ENCODE measurements at regions of chr12 and their contacts with region 1.

Region 1: DNA sequence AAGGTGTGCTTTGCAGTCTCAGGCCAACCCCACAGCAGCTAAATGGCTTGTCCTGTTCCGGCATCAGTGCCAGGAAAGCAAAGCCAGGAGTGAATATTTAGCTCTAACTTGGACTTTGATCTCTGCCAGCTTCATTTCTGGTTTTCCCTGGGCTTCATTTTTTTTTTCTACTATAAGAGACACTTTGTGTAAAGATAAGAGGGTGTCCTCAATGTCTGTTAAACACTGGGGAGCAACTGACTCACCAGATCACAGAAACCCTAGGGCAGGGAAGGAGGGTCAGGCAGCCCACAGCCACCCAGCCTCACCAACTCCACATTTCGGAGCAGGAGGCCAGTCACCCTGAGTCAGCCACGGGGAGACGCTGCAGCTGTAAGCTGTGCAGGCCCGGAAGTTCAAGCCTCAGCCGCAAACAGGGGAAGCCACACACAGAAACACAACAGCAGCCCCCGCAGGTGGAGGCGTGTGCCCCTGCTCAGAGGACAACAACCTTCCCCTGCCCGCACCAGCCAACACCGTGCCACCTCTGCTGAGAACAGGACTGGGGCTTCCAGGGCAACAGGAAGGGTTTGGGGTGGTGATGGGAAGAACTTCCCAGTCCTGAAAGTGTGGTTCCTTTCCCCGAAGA is 6.3 kb downstream of the TNFRSF1A start:
- DNase-seq: peak; percentile 85
- ATAC-seq: peak; percentile 51

Region 2: GRCh38 chr12:6372403-6373003 is 36.9 kb after region 1 on chr12:
- intact Hi-C with region 1: no loop called
- DNase-seq: no peak
- ATAC-seq: no peak

Region 3: GRCh38 chr12:6383572-6384498 is 48.3 kb after region 1 on chr12 and contains the start of gene LTBR:
- intact Hi-C with region 1: loop called (anchors 5 kb)
- DNase-seq: peak; percentile 98
- ATAC-seq: peak; percentile 97
- total RNA-seq, gene LTBR: 23.2 TPM

Region 4: GRCh38 chr12:6461401-6462233 is 126.1 kb after region 1 on chr12:
- intact Hi-C with region 1: loop called (anchors 5 kb)
- DNase-seq: peak; percentile 64
- ATAC-seq: peak; percentile 23

Measured in Right ventricle myocardium superior (tissue), 1 donor.